ENCODE measurements at regions of chr1 and their contacts with region 1.

Region 1: GRCh38 chr1:30790850-30791778 is 33.5 kb upstream of the LAPTM5 start:
- DNase-seq: no peak
- H3K4me3 ChIP-seq: no peak overlapping the region
- H3K27ac ChIP-seq: no peak overlapping the region
- H3K4me1 ChIP-seq: no peaks in the 10 kb centered on the region
- H3K27me3 ChIP-seq: no peaks in the 10 kb centered on the region
- CTCF ChIP-seq: no peak
- EP300 ChIP-seq: no peak
- POLR2A ChIP-seq: no peak

Region 2: GRCh38 chr1:30919025-30919881 is 128.1 kb after region 1 on chr1:
- intact Hi-C with region 1: loop called in 1 of 4 experiments (anchors 5 kb)
- DNase-seq: peak in 2 of 5 donors; percentile 6 to 17
- H3K4me3 ChIP-seq: no peak overlapping the region
- H3K27ac ChIP-seq: no peak overlapping the region
- H3K4me1 ChIP-seq: peaks cover 3% of the 10 kb centered on the region
- H3K27me3 ChIP-seq: no peaks in the 10 kb centered on the region
- CTCF ChIP-seq: no peak
- EP300 ChIP-seq: no peak
- POLR2A ChIP-seq: no peak

Region 3: GRCh38 chr1:31152181-31152798 is 361.2 kb after region 1 on chr1:
- intact Hi-C with region 1: no loop called
- DNase-seq: no peak
- H3K4me3 ChIP-seq: no peak overlapping the region
- H3K27ac ChIP-seq: no peak overlapping the region
- H3K4me1 ChIP-seq: no peaks in the 10 kb centered on the region
- H3K27me3 ChIP-seq: no peaks in the 10 kb centered on the region
- CTCF ChIP-seq: no peak
- EP300 ChIP-seq: no peak
- POLR2A ChIP-seq: no peak

Region 4: DNA sequence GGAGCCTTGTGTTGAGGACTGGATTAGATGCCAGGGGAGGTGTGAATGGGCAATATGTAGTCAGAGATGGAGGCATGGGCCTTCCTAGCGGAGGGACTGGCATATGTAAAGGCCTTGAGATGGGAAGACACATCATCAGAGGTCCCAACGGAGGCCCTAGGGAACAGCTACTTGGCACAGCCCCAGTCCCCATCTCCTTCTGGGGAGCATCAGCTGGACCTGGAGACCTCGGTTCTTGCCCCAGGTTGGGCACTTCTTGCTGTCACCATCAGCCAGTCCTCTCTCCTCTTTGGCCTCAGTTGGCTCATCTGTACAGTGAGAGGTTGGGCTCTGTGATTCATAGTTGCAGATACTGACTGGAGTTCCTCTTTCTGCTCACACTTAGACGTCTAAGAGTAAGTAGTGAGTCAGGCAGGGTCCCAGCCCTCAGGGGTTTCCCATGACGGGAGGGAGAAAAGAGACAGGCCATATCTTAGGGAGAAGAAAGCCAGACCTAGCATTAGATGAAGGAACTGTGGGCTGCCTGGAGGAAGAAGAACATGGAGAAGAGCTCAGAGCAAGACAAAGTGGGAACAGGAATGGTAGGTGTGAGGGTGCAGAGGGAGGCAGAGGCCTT is 1548.4 kb after region 1 on chr1:
- intact Hi-C with region 1: no loop called
- DNase-seq: peak in 1 of 5 donors; percentile 14
- H3K4me3 ChIP-seq: no peak overlapping the region
- H3K27ac ChIP-seq: no peak overlapping the region
- H3K4me1 ChIP-seq: peaks cover 3% of the 10 kb centered on the region
- H3K27me3 ChIP-seq: no peaks in the 10 kb centered on the region
- CTCF ChIP-seq: no peak
- EP300 ChIP-seq: no peak
- POLR2A ChIP-seq: no peak